ENCODE measurements at regions of chr4 and their contacts with region 1.

Region 1: DNA sequence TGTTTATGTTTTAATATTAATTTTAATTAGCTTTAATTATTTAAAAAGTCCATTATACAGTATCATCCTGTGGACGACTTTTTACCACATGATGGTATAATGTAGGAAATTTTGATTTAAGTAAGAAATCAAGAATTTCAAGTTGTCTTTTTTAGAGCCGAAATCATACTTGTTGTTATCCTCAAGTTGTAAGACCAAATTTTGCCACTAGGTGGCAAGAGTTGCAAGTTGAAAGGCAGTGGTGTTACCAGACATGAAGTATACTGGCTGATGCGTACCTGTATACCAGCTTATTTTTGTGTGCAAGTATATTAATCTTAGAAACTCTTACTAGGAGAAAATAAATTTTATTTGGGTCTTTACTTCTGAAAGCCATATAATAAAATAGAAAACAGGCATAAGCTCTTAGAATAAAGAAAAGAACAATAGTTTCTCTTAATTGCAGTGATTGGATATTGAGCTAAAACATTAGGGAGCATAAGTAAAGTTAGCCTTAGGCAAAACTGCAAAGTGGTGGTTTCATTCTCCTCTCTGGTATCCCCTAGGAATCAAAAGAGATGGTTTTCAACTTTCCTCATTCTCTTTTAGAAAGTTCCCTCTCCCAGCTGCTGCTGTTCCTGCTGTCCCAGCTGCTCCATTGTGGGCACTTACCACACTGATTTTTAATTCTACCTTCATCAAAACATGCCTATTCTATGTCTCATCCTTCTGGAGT is 118.0 kb upstream of the WDFY3 start:
- DNase-seq: peak in 1 of 2 experiments; percentile 4
- H3K4me3 ChIP-seq: no peak overlapping the region
- H3K27ac ChIP-seq: no peak overlapping the region
- H3K4me1 ChIP-seq: no peaks in the 10 kb centered on the region
- H3K27me3 ChIP-seq: no peaks in the 10 kb centered on the region
- CTCF ChIP-seq: peak; percentile 74

Region 2: DNA sequence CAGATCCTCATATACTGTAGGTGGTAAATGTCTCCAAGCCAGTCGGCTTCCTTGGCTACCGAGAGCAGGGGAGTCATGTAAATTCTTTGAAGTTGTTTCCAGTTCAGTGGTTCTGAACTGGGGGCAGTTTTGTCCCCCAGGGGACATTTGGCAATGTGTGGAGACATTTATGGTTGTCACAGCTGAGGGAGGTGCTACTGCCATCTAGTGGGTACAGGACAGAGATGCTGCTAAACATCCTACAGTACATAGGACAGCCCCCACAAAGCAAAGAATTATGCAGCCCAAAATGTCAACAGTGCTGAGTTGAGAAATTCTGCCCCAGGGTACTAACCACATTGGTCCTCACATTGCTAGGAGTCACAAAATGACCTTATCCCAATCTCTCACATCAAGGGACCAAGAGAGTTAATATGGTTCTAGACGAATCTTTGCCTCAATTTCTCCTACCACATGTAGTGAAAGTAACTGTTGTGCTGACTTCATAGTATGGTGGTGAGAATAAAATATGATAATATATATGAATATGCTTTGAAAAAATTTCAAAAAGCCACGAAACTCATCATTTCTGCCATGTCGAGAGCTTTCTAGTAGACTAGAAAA is 286.0 kb after region 1 on chr4:
- CTCF ChIA-PET with region 1: no interaction called
- POLR2A ChIA-PET with region 1: no interaction called
- intact Hi-C with region 1: loop called (anchors 5 kb)
- DNase-seq: peak in 1 of 2 experiments; percentile 19
- H3K4me3 ChIP-seq: no peak overlapping the region
- H3K27ac ChIP-seq: no peak overlapping the region
- H3K4me1 ChIP-seq: no peaks in the 10 kb centered on the region
- H3K27me3 ChIP-seq: no peaks in the 10 kb centered on the region
- CTCF ChIP-seq: peak; percentile 77

Region 3: DNA sequence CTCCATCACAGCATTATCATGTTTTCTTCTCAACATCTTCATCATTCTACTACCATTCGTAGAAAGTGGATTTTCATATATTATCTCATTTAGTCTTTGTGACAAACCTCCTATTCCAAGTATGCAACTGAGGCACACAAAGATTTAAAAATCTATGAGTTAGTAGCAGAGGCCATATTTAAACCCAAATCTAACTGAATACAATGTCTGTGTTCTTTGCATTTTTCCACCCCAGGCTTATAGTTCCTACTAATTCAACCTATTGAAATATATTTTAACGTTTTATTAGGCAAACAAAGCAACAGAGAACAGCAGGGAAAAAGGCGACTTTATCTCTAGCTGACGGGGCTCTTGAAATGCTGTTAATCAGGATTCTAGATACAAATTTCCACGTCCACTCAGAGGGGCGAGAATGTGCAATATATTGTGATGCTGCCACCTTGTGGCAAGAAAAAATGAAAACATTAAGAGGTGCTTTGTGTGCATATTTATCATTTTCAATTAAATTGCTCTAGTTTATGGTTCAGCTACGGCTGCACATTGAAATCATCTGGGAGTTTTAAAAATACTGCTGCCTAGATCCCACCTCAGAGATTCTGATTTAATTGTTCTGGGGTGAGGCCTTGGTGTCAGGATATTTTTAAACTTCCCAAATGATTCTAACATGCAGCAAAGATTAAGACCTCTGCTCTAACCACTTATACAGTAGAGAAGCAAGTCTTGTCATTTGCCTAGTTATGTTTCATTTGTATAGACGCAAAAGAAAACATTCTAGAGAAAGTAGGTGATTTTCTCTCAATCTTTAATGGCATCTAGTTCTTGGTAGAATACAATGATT is 959.4 kb after region 1 on chr4:
- CTCF ChIA-PET with region 1: no interaction called
- POLR2A ChIA-PET with region 1: no interaction called
- intact Hi-C with region 1: loop called (anchors 5 kb)
- DNase-seq: no peak
- H3K4me3 ChIP-seq: no peak overlapping the region
- H3K27ac ChIP-seq: no peak overlapping the region
- H3K4me1 ChIP-seq: no peaks in the 10 kb centered on the region
- H3K27me3 ChIP-seq: no peaks in the 10 kb centered on the region
- CTCF ChIP-seq: peak; percentile 76

Measured in PC-9 (cell line).